ENCODE measurements at regions of chr9 and their contacts with region 1.

Region 1: GRCh38 chr9:27394154-27394825 is 97.3 kb upstream of the EQTN start:
- DNase-seq: no peak
- H3K4me3 ChIP-seq: no peak overlapping the region
- H3K27ac ChIP-seq: peak overlapping the region; percentile 9 to 52
- H3K4me1 ChIP-seq: peaks cover 0 to 18% of the 10 kb centered on the region in 2 donors
- H3K27me3 ChIP-seq: no peaks in the 10 kb centered on the region
- CTCF ChIP-seq: no peak

Region 2: GRCh38 chr9:27340961-27341511 is 53.3 kb before region 1 on chr9:
- intact Hi-C with region 1: loop called (anchors 5 kb)
- DNase-seq: no peak
- H3K4me3 ChIP-seq: no peak overlapping the region
- H3K27ac ChIP-seq: peak overlapping the region; percentile 74 to 86
- H3K4me1 ChIP-seq: peaks cover 14 to 54% of the 10 kb centered on the region in 2 donors
- H3K27me3 ChIP-seq: no peaks in the 10 kb centered on the region
- CTCF ChIP-seq: no peak

Region 3: GRCh38 chr9:27743490-27743889 is 349.2 kb after region 1 on chr9:
- intact Hi-C with region 1: no loop called
- DNase-seq: no peak
- H3K4me3 ChIP-seq: no peak overlapping the region
- H3K27ac ChIP-seq: no peak overlapping the region
- H3K4me1 ChIP-seq: no peaks in the 10 kb centered on the region
- H3K27me3 ChIP-seq: no peaks in the 10 kb centered on the region
- CTCF ChIP-seq: no peak